Heart left ventricle (tissue), 16 donors: ENCODE measurements at regions of chr18 and their contacts with region 1.

Region 1: DNA sequence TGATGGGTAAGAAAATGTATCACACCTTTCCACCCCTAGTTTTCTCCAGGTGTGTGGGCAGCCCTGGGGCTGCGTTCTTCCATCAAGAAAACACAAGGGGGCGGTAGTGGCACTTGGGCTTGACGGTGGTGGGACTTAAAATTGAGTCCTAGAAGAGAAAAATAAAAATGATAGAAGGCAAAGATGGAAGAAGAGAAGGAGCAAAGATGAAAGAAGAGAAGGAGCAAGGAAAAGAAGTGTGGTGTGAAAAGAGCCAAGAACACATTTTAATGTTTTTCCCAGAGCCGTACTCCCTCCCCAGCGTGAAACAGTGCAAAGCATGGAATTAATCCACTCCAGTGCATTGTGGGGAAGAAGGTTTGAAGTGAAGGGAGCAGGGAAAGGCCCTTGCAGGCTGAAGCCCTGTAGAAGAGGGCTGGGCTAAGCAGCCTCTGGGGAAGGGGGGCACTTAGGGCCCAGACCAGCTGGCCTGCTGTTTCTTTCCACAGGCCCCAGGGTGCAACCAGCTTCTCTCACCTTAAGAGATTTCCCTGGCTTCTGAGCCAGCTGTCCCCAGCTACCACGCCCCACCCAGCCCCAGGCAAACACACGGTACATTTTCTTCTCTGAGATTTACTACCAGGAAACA is 256.8 kb downstream of the RNF152 start:
- DNase-seq: peak; percentile 35 to 64 (median 50)
- ATAC-seq: peak; percentile 51 to 87 (median 80)
- H3K4me3 ChIP-seq: no peak overlapping the region
- H3K27ac ChIP-seq: peak overlapping the region in 10 of 12 donors; percentile 8 to 73 (median 36)
- H3K4me1 ChIP-seq: peaks cover 0 to 14% (median 6%) of the 10 kb centered on the region in 12 donors
- H3K27me3 ChIP-seq: no peaks in the 10 kb centered on the region
- CTCF ChIP-seq: peak; percentile 74 to 93 (median 87)
- POLR2A ChIP-seq: no peak

Region 2: GRCh38 chr18:61216051-61216450 is 420.0 kb before region 1 on chr18:
- intact Hi-C with region 1: no loop called
- DNase-seq: no peak
- ATAC-seq: no peak
- H3K4me3 ChIP-seq: no peak overlapping the region
- H3K27ac ChIP-seq: no peak overlapping the region
- H3K4me1 ChIP-seq: no peaks in the 10 kb centered on the region
- H3K27me3 ChIP-seq: no peaks in the 10 kb centered on the region
- CTCF ChIP-seq: no peak
- POLR2A ChIP-seq: no peak

Region 3: DNA sequence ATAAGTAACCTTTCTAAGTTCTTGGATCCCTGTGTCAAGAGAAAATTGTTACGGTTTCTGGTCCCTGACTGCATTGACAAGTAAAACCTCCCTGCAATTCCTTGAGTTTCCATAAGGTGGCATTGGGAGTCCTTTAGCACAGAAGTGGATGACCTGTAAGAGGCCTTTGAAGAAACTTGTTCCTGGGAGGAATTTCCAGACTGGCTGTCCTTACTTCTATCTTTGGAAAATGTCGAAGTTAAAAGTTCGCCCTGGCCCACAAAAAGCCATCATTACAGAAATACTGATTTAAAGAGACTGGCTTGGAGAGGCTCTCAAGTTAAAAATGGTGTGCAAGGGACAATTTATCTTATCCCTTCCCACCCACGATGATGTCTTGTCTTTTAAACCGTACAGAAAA is 84.4 kb before region 1 on chr18:
- intact Hi-C with region 1: loop called in 1 of 10 experiments (anchors 5 kb)
- DNase-seq: peak in 2 of 5 donors; percentile 47 to 56
- ATAC-seq: peak; percentile 78 to 85 (median 80)
- H3K4me3 ChIP-seq: no peak overlapping the region
- H3K27ac ChIP-seq: no peak overlapping the region
- H3K4me1 ChIP-seq: peaks cover 0 to 8% (median 0%) of the 10 kb centered on the region in 12 donors
- H3K27me3 ChIP-seq: no peaks in the 10 kb centered on the region
- CTCF ChIP-seq: peak; percentile 72 to 92 (median 88)
- POLR2A ChIP-seq: no peak

Region 4: DNA sequence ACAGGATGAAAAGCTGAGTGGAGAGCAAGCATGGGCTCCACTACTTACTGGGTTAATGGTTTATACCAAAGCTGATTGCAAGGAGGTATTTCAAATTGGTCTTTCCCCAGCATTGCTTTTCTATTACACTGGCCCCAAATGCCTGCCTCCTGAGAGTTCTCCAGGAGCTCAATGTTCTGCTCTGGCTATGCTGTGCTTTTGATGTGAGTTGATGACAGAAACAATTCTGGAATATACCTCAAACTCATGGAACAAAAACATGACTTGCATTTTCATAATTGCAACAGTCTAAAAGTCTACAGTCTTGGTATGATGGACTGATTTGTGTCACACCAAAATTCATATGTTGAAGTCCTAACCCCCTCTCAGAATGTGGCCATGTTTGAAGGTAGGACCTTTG is 44.8 kb before region 1 on chr18:
- intact Hi-C with region 1: no loop called
- DNase-seq: no peak
- ATAC-seq: no peak
- H3K4me3 ChIP-seq: no peak overlapping the region
- H3K27ac ChIP-seq: peak overlapping the region in 1 of 12 donors; percentile 26
- H3K4me1 ChIP-seq: peaks cover 0 to 37% (median 14%) of the 10 kb centered on the region in 12 donors
- H3K27me3 ChIP-seq: no peaks in the 10 kb centered on the region
- CTCF ChIP-seq: no peak
- POLR2A ChIP-seq: no peak

Region 5: DNA sequence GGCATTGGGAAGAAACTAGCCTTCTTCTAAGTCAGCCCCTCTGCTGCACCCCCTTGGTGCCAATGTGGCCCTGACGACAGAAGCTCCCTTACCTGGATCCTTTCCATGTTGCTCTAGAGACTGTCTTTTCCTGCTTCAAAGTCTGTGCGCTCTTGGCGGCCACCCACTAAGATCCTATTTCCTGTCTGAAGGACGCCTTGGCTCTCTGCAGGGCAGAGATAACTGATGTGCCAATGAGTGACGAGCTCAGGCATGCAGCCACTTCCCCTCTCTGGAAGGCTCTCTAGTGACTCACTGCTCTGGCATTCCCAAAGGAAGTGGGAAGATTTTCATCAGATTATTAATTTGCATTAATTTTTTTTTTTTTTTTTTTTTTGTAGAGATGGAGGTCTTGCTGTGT is 29.3 kb before region 1 on chr18:
- intact Hi-C with region 1: loop called in 1 of 10 experiments (anchors 2 kb)
- DNase-seq: peak; percentile 72 to 91 (median 80)
- ATAC-seq: peak; percentile 94 to 96 (median 94)
- H3K4me3 ChIP-seq: peak overlapping the region in 11 of 12 donors; percentile 25 to 57 (median 50)
- H3K27ac ChIP-seq: peak overlapping the region; percentile 71 to 85 (median 80)
- H3K4me1 ChIP-seq: peaks cover 0 to 41% (median 20%) of the 10 kb centered on the region in 12 donors
- H3K27me3 ChIP-seq: no peaks in the 10 kb centered on the region
- CTCF ChIP-seq: peak in 1 of 12 donors; percentile 15
- POLR2A ChIP-seq: no peak

Region 6: DNA sequence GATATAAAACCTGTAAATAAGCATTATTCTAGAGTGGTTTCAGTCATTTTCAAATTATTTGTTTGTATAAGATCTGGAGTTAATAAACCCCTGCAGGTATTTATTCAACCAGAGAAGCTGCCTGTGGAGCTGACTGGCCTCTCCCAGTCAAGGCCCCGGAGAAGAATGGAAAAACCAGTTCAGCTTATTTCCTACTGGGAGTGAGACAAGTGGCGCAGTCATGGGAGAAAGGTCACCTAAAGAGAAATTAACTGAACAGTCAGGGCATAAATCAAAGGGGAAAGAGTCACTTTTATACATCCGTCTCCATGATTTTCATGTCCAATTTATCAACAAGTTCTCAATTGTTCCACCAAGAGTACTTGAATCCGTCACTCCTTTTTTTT is 15.9 kb after region 1 on chr18:
- intact Hi-C with region 1: no loop called
- DNase-seq: no peak
- ATAC-seq: no peak
- H3K4me3 ChIP-seq: no peak overlapping the region
- H3K27ac ChIP-seq: no peak overlapping the region
- H3K4me1 ChIP-seq: peaks cover 0 to 5% (median 0%) of the 10 kb centered on the region in 12 donors
- H3K27me3 ChIP-seq: no peaks in the 10 kb centered on the region
- CTCF ChIP-seq: no peak
- POLR2A ChIP-seq: no peak

Region 7: DNA sequence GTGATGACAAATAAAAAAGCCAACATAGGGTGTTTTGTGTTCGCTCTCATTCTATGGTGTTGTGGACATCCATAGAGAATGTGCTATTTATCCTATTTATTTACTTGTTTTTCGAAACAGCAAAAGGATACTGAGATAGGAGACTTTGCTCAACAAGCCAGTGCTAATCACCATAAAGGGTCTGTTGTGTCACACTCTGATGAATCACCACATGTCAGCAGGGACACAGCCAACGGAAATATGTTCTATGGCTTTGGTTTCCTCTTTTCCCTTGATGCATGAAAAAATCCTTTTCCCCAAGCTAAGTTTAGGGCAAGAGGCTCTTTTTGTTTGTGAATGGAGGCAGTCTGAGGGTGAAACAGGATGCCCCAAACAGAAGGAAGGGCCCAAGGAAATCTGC is 102.5 kb after region 1 on chr18:
- intact Hi-C with region 1: loop called in 5 of 10 experiments (anchors 2 to 10 kb)
- DNase-seq: no peak
- ATAC-seq: peak in 3 of 4 donors; percentile 31 to 51 (median 39)
- H3K4me3 ChIP-seq: no peak overlapping the region
- H3K27ac ChIP-seq: peak overlapping the region; percentile 57 to 84 (median 72)
- H3K4me1 ChIP-seq: peaks cover 0 to 56% (median 30%) of the 10 kb centered on the region in 12 donors
- H3K27me3 ChIP-seq: no peaks in the 10 kb centered on the region
- CTCF ChIP-seq: no peak
- POLR2A ChIP-seq: no peak

Region 8: GRCh38 chr18:61901323-61901986 is 265.4 kb after region 1 on chr18:
- intact Hi-C with region 1: loop called in 3 of 10 experiments (anchors 2 to 5 kb)
- DNase-seq: peak in 3 of 5 donors; percentile 27 to 47 (median 30)
- ATAC-seq: peak; percentile 62 to 79 (median 72)
- H3K4me3 ChIP-seq: no peak overlapping the region
- H3K27ac ChIP-seq: no peak overlapping the region
- H3K4me1 ChIP-seq: peaks cover 0 to 7% (median 0%) of the 10 kb centered on the region in 12 donors
- H3K27me3 ChIP-seq: peaks cover 0 to 13% (median 0%) of the 10 kb centered on the region in 9 donors
- CTCF ChIP-seq: peak; percentile 81 to 93 (median 90)
- POLR2A ChIP-seq: no peak